Posterior cingulate gyrus (tissue), 11 donors: ENCODE measurements at regions of chr2 and their contacts with region 1.

Region 1: GRCh38 chr2:151828143-151828889 is at the start of gene ARL5A:
- DNase-seq: peak; percentile 92 to 99 (median 94)

Region 2: GRCh38 chr2:150924878-150925277 is 903.4 kb before region 1 on chr2:
- intact Hi-C with region 1: no loop called
- DNase-seq: no peak

Region 3: DNA sequence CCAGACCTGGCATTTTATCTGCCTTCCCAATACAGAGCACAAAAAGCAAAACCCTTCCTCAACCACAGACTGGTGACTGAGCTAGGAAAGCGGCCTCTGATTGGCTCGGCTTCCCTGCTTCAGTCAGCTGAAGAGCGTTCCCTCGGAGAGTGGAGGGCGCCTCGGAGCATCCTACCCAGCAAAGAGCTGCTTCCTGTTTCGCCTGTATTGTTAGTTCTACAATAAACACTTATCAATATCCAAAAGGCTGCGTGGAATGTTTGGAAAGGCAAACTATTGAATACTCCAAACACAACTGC is 145.5 kb after region 1 on chr2:
- intact Hi-C with region 1: loop called (anchors 10 kb)
- DNase-seq: peak; percentile 59 to 96 (median 75)

Region 4: DNA sequence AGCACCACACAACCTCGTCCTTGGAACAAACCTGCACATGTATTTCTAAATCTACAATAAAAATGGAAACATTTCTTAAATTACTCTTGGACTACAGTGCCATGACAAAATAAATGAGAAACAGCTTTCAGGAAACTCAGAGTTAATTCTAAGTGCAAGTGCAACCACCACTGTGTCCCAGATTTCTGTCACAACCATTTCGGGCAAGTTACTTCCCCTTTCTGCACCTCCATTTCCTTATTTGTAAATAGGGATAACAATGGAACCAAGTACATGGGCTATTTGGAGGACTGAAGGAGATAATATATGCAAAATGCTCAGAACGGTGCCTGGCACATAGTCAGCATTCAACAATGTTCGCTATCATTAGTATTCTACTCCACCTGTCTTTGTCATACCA is 177.3 kb after region 1 on chr2:
- intact Hi-C with region 1: loop called (anchors 10 kb)
- DNase-seq: no peak